GM12878 (cell line): ENCODE measurements at regions of chr11 and their contacts with region 1.

Region 1: DNA sequence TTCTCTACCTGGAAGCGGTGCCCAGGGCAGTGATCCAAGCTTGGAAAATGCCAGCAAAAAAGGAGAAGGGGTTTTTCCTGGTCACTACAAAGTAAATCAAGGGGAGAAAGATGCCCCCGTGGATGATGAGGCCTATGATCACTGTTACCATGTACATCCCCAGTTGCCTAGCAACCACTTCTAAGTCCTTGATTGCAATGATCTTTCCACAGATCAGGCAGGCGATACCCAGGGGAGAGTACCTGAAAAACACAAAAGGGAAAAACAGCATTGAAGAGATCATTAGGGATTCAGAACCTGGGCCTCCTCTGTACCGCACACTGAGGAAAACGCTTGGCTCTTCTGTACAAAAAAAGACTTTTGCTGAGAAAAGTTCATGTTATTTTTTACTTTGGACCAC is 127.1 kb downstream of the SLC1A2 start:
- DNase-seq: no peak
- ATAC-seq: peak; percentile 53
- H3K4me3 ChIP-seq: no peak overlapping the region
- H3K27ac ChIP-seq: no peak overlapping the region; the same call in 1 of the 2 replicates
- H3K4me1 ChIP-seq: peaks cover 9% of the 10 kb centered on the region
- H3K27me3 ChIP-seq: no peaks in the 10 kb centered on the region
- CTCF ChIP-seq: no peak
- EP300 ChIP-seq: no peak
- POLR2A ChIP-seq: no peak
- RAD21 ChIP-seq: no peak

Region 2: DNA sequence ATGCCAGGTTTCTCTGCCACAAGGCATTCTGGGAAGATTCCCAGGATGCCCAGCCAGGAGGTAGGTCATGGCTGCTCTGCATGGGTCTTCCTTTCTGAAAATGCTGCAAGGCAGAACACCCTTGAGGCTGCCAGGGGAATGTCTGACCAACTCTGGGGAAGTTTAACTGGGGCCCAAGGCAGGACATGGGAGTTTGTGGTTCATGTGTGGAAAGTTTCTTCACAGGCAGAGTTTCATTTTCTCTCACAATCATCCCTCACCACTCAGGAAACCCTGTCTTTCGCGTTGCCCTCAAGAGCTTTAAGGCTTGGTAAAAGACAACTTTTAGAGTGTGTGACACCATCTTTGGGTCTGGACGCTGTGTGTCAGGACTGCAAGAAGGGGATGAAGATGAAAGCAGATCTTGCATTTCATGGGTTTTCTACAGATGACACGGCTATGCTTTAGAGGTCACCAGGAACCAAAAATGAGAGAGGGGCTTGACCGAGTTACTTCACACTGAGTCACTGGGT is 19.8 kb before region 1 on chr11:
- CTCF ChIA-PET with region 1: interaction called, 3 read pairs
- POLR2A ChIA-PET with region 1: no interaction called
- RAD21 ChIA-PET with region 1: interaction called, 3 read pairs
- SMC1A ChIA-PET with region 1: interaction called, 14 read pairs
- in situ Hi-C with region 1: no loop called
- intact Hi-C with region 1: no loop called
- DNase-seq: peak; percentile 95
- ATAC-seq: peak; percentile 94
- H3K4me3 ChIP-seq: 0 out of 2 replicates have a peak overlapping the region, but pooled peaks have one; percentile 7
- H3K27ac ChIP-seq: peak overlapping the region; percentile 56
- H3K4me1 ChIP-seq: peaks cover 22% of the 10 kb centered on the region
- H3K27me3 ChIP-seq: no peaks in the 10 kb centered on the region
- CTCF ChIP-seq: peak; percentile 5 to 12 (median 10); a peak in 3 of 6 replicates
- EP300 ChIP-seq: peak; percentile 57 to 70; a peak in 2 of 4 replicates
- POLR2A ChIP-seq: no peak
- RAD21 ChIP-seq: peak; percentile 22; the same call in 1 of the 2 replicates